ENCODE measurements at regions of chr2 and their contacts with region 1.

Region 1: DNA sequence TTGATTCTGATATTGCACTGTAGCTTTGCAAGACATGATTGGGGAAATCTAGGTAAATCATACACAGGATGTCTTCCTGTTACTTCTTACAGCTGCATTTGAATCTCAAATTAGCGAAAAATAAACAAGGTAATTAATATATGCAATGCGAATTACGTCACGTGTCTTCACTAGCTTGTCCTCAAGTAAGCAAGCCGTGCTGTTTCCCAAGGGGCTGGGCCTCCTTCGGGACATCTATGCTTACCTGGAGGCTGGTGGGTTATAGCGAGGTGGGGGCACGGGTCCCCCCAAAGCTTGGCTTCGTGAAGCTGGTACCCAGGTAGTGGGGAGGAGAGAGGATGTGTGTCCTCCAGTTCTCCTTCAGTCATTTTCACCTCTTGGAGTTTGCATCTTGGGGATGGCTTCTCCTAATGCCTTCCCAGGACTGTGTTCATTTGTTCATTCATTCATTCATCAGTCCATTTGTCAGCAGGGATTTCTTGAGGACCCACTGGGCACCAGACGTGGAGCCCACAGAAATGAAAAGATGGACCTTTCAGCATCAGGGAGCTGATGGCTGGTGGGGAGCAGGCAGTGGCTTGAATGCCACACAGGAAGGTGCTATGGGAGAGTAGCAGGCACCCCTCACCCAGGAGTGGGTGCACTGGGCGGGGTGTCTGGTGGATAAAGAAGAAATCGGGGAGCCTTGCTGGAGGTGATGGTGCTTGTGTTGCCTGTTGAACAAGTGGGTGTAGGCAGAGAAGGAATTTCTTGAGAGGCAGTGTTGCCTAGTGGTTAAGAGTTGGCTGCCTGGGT is 155.1 kb downstream of the GLI2 start:
- DNase-seq: no peak
- H3K4me3 ChIP-seq: no peak overlapping the region
- H3K27ac ChIP-seq: no peak overlapping the region
- H3K4me1 ChIP-seq: no peaks in the 10 kb centered on the region
- H3K27me3 ChIP-seq: no peaks in the 10 kb centered on the region
- CTCF ChIP-seq: no peak
- POLR2A ChIP-seq: no peak

Region 2: GRCh38 chr2:119366649-119367471 is 1523.9 kb before region 1 on chr2 and contains the starts of genes C2orf76 and DBI:
- intact Hi-C with region 1: no loop called
- DNase-seq: peak; percentile 95 to 96
- H3K4me3 ChIP-seq: peak within 1 kb of the TSS; percentile 69 to 86 (median 77)
- H3K27ac ChIP-seq: peak within 1 kb of the TSS; percentile 95
- H3K4me1 ChIP-seq: peaks cover 3% of the 10 kb centered on the region in 2 donors
- H3K27me3 ChIP-seq: no peaks in the 10 kb centered on the region
- CTCF ChIP-seq: no peak
- POLR2A ChIP-seq: peak; percentile 73
- total RNA-seq, gene C2orf76: 12.5 to 17.0 (median 13.0) TPM
- total RNA-seq, gene DBI: 160 to 236 (median 202) TPM

Region 3: DNA sequence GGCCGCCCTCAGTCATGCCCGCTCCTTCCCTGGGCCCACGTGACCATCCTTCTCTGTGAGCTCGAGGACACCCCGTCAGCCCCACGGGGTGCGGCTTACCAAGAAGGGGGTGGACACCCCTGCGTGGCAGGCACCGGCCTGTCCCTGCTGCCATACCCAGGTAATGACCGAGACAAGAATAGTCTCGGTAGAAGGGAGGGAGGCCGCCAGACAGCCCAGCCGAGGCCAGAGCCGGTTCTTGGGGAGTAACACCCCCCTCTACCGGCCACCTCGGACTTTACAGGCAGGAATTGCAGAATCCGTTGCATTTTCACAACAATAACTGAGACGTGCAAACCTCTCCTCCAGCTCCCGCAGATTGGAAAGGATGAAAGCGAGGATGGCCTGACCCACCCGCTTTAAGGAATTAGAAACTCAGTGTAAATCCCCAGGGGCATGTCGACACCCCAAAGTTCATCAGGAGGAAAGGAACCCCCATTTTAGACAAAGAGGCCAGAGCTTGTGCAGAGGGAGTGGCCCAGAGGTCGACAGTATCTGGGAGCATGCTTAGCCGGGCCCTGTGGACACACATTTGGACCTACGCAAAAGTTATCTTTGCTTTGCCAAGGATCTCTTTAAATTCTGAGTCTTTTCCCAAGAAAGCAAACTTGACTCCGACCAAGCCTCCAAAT is 215.2 kb before region 1 on chr2:
- intact Hi-C with region 1: no loop called
- DNase-seq: no peak
- H3K4me3 ChIP-seq: no peak overlapping the region
- H3K27ac ChIP-seq: no peak overlapping the region
- H3K4me1 ChIP-seq: no peaks in the 10 kb centered on the region
- H3K27me3 ChIP-seq: no peaks in the 10 kb centered on the region
- CTCF ChIP-seq: peak; percentile 31 to 70 (median 56)
- POLR2A ChIP-seq: no peak

Region 4: DNA sequence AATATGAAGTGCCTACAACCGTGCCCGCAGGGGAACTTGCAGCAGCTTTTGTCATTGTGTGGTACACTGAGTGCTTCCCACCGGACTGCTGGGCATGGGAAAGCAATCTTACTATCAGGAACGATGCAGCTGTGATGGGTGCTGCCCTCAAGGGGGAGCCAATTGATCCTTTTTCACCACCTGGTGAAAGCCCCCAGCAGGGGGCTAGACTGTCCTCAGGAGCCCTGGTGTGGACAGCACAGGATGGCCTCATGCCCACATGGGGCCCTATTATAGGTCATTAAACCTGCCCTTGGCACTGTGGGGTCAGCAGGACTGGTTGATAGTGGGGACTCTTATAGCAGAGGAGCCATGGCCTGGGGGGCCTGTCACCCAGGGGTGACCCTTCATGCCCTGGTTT is 17.0 kb after region 1 on chr2:
- intact Hi-C with region 1: loop called (anchors 2 kb)
- DNase-seq: no peak
- H3K4me3 ChIP-seq: no peak overlapping the region
- H3K27ac ChIP-seq: no peak overlapping the region
- H3K4me1 ChIP-seq: no peaks in the 10 kb centered on the region
- H3K27me3 ChIP-seq: no peaks in the 10 kb centered on the region
- CTCF ChIP-seq: no peak
- POLR2A ChIP-seq: no peak

Measured in breast epithelium (tissue), 4 donors.